ENCODE measurements at regions of chr3 and their contacts with region 1.

Region 1: GRCh38 chr3:184250167-184250828 is 826 bp downstream of the EEF1AKMT4 start:
- H3K4me3 Mint-ChIP-seq: peak overlapping the region; percentile 93
- H3K27ac Mint-ChIP-seq: peak overlapping the region; percentile 99
- H3K4me1 Mint-ChIP-seq: peaks cover 27% of the 10 kb centered on the region
- H3K27me3 Mint-ChIP-seq: no peaks in the 10 kb centered on the region

Region 2: DNA sequence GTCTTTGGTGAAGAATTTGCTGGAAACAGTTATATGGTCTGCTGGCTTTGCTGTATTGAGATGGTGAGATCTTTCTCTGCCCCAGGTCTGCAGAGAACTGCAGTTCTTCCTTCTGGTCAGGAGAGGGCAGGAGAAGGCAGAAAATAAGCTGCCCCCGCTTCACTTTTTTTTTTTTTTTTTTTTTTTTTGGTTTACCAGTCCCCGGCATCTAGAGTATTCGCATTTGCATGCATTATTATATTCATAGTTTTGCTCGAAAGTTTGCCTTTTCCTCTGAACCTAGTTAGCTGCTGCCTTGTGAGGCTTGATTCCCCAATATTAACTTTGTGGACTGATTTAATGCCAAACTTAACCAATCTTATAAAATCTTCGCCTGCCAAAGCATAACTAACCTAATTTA is 355.0 kb before region 1 on chr3:
- intact Hi-C with region 1: loop called (anchors 1 kb)
- H3K4me3 Mint-ChIP-seq: no peak overlapping the region
- H3K27ac Mint-ChIP-seq: no peak overlapping the region
- H3K4me1 Mint-ChIP-seq: peaks cover 6% of the 10 kb centered on the region
- H3K27me3 Mint-ChIP-seq: peaks cover 18% of the 10 kb centered on the region

Region 3: GRCh38 chr3:184135149-184135910 is 115.0 kb before region 1 on chr3 and contains the start of gene EIF2B5:
- intact Hi-C with region 1: loop called (anchors 1 kb)
- H3K4me3 Mint-ChIP-seq: peak within 1 kb of the TSS; percentile 95
- H3K27ac Mint-ChIP-seq: peak within 1 kb of the TSS; percentile 87
- H3K4me1 Mint-ChIP-seq: peaks cover 27% of the 10 kb centered on the region
- H3K27me3 Mint-ChIP-seq: no peaks in the 10 kb centered on the region

Region 4: GRCh38 chr3:184227481-184227935 is 22.8 kb before region 1 on chr3:
- intact Hi-C with region 1: loop called (anchors 2 kb)
- H3K4me3 Mint-ChIP-seq: no peak overlapping the region
- H3K27ac Mint-ChIP-seq: no peak overlapping the region
- H3K4me1 Mint-ChIP-seq: peaks cover 8% of the 10 kb centered on the region
- H3K27me3 Mint-ChIP-seq: peaks cover 75% of the 10 kb centered on the region

Region 5: GRCh38 chr3:184417619-184418327 is 167.5 kb after region 1 on chr3:
- intact Hi-C with region 1: no loop called
- H3K4me3 Mint-ChIP-seq: no peak overlapping the region
- H3K27ac Mint-ChIP-seq: no peak overlapping the region
- H3K4me1 Mint-ChIP-seq: no peaks in the 10 kb centered on the region
- H3K27me3 Mint-ChIP-seq: peaks cover 1% of the 10 kb centered on the region

Measured in dendritic cell treated with granulocyte-macrophage colony-stimulating factor and Interleukin-4, amounts not matched to agents 40 ng/mL and 50 ng/mL, for 4 days (primary cell).